WTC11 (cell line): ENCODE measurements at regions of chr10 and their contacts with region 1.

Region 1: DNA sequence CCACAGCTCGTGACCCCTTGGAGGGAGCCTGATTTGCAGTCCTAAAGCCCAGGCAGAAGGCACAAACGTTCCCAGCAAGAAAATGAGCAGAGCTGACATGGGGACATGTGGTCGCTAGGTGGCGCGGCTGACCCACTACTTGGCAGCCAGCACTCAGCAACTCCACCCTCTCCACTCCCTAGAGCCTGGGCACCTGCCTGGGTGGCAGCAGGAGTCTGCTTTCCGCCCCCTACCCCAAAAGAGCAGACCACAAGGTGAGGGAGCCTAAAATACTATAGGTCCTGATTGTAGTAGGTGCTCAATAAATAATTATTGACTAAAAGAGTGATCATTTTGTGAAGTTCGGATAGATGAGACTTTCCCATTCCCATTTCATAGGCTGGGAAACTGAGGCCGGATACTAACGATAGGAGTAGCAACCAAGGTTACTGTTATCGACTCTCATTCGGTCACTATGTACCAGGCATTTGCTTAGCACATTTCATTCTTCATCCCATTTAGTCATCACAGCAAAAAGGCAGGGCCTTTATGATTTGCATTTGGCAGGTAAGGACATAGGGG is 57.4 kb downstream of the NEUROG3 start:
- DNase-seq: peak; percentile 88
- ATAC-seq: peak; percentile 89
- H3K4me3 Mint-ChIP-seq: no peak overlapping the region
- H3K27ac Mint-ChIP-seq: no peak overlapping the region
- H3K4me1 Mint-ChIP-seq: peaks cover 19% of the 10 kb centered on the region
- H3K27me3 Mint-ChIP-seq: no peaks in the 10 kb centered on the region
- CTCF ChIP-seq: peak; percentile 94

Region 2: DNA sequence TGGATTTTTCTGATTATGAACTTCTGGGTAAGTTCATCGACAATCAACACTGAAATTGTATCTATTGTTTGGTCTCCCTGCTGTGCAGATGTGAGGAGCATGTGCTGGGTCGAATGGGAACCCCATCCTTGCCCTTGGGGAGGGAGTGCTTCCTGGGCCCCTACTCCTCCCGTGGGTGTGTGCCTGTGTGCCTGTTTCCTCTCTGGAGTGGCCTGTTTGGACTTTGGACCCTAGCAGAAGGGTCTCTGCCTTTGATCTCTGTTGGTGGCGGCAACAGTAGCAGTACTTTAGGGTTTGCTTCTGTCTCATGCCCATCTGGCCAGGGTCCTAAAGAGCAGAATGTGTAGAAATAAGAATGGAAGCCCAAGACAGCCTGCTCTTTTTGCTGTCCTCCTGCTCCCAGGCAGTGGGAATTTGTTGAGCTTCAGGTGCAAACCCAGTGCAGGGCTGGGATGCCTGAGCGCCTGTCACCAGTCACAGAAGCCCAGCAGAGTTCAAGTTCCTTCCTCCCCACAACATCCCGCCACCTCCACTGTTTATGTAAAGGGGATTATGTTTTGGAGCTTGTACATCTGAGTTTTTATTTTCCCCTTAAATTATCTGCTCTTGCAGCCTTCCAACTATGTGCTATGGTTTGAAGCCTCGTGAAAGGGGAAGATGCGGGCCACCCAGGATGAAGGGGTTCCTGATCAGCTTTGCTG is 97.6 kb before region 1 on chr10:
- CTCF ChIA-PET with region 1: interaction called, 19 read pairs
- POLR2A ChIA-PET with region 1: no interaction called
- DNase-seq: no peak
- ATAC-seq: no peak
- H3K4me3 Mint-ChIP-seq: no peak overlapping the region
- H3K27ac Mint-ChIP-seq: no peak overlapping the region
- H3K4me1 Mint-ChIP-seq: peaks cover under 1% of the 10 kb centered on the region; the same call in 1 of the 2 replicates
- H3K27me3 Mint-ChIP-seq: peaks cover 2% of the 10 kb centered on the region; the same call in 1 of the 2 replicates
- CTCF ChIP-seq: no peak

Region 3: GRCh38 chr10:69537449-69537848 is 21.7 kb after region 1 on chr10:
- CTCF ChIA-PET with region 1: no interaction called
- POLR2A ChIA-PET with region 1: no interaction called
- DNase-seq: no peak
- ATAC-seq: no peak
- H3K4me3 Mint-ChIP-seq: no peak overlapping the region
- H3K27ac Mint-ChIP-seq: no peak overlapping the region
- H3K4me1 Mint-ChIP-seq: no peaks in the 10 kb centered on the region
- H3K27me3 Mint-ChIP-seq: peaks cover 29% of the 10 kb centered on the region
- CTCF ChIP-seq: no peak

Region 4: DNA sequence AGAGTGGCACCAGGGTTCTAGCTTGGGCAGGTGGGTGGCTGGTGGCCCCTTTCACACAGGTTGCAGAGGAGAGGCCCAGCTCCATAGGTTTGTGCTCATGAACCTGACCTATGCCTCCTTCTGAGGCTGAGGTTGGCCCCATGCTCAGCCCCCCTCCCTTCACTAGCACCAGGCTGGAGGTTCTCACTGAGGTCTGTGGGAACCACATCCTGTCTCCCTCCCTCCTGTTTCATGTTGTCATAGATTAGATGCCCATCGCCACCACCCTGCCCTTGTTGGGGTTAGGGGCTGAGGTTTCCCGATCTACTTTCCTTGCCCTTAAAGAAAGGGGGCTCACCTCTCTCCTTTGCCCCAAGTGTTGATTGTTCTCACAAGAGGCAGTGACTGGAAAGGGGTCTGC is 42.8 kb after region 1 on chr10:
- CTCF ChIA-PET with region 1: interaction called, 13 read pairs
- POLR2A ChIA-PET with region 1: no interaction called
- DNase-seq: no peak
- ATAC-seq: no peak
- H3K4me3 Mint-ChIP-seq: no peak overlapping the region
- H3K27ac Mint-ChIP-seq: no peak overlapping the region
- H3K4me1 Mint-ChIP-seq: peaks cover 23% of the 10 kb centered on the region
- H3K27me3 Mint-ChIP-seq: peaks cover 15% of the 10 kb centered on the region
- CTCF ChIP-seq: no peak

Region 5: DNA sequence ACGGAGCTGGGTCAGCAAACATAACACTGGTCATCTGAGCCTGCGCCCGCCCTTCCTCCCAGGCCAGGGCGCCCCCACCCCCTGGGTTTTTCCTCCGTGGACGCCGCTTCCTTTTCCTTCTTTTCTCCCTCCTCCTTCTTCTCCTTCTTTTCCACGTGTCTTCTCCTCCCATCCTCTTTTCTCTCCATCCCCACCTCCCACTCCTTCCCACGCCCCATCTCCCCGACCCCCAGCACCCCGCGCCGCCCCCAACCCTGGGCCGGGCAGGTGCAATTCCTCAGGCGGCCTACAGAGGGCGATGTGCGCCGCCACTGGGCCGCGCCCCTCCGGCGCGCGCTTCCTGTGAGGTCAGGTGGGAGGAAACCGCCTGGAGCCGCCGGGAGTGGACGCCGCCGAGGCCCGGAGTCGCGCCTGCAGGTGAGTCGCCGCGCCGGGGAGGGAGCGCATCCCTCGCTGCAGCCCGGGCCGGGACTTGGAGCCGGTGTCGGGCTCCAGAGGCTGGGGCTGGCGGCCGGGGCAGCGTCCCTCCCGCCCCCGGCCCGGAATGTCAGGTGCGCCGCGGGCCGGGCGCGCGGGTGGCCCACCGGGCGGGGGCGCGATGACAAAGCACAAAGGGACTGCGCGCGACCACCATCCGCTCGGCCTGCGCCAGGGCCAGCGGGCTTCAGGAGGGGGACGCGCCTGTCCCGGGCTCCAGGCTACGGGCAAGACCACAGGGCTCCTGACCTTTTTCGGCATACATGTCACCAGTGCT is 114.3 kb after region 1 on chr10 and contains the start of gene FAM241B:
- CTCF ChIA-PET with region 1: interaction called, 511 read pairs
- POLR2A ChIA-PET with region 1: interaction called, 19 read pairs
- DNase-seq: peak; percentile 88
- ATAC-seq: peak; percentile 83
- H3K4me3 Mint-ChIP-seq: peak within 1 kb of the TSS; percentile 76
- H3K27ac Mint-ChIP-seq: no peak within 1 kb of the TSS
- H3K4me1 Mint-ChIP-seq: peaks cover 8% of the 10 kb centered on the region
- H3K27me3 Mint-ChIP-seq: peaks cover 15% of the 10 kb centered on the region
- CTCF ChIP-seq: peak; percentile 100
- total RNA-seq, gene FAM241B: 24.4 to 28.9 TPM (median 26.9 TPM) in 3 replicates

Region 6: DNA sequence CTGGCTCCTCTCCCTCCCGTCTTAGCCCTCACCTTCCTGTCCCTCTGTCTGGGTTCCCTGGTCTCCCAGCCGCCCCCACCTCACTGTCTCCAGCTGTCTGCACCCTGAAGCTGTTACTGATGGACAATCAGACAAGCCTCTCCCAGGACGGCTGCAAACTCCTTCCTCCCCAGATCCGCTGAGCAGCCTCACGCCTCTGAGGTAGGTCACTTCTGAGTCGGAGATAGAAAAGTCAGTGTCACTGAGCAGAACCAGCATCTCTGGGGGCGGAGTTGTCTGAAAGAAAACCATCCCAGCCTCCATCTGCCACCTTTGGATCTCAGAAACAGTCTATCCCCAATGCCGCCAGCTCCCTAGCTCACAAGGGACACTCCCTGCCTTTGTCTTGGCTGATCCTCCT is 141.7 kb after region 1 on chr10:
- CTCF ChIA-PET with region 1: interaction called, 48 read pairs
- POLR2A ChIA-PET with region 1: no interaction called
- DNase-seq: no peak
- ATAC-seq: no peak
- H3K4me3 Mint-ChIP-seq: no peak overlapping the region
- H3K27ac Mint-ChIP-seq: no peak overlapping the region
- H3K4me1 Mint-ChIP-seq: peaks cover 48% of the 10 kb centered on the region
- H3K27me3 Mint-ChIP-seq: peaks cover 5% of the 10 kb centered on the region
- CTCF ChIP-seq: no peak

Region 7: DNA sequence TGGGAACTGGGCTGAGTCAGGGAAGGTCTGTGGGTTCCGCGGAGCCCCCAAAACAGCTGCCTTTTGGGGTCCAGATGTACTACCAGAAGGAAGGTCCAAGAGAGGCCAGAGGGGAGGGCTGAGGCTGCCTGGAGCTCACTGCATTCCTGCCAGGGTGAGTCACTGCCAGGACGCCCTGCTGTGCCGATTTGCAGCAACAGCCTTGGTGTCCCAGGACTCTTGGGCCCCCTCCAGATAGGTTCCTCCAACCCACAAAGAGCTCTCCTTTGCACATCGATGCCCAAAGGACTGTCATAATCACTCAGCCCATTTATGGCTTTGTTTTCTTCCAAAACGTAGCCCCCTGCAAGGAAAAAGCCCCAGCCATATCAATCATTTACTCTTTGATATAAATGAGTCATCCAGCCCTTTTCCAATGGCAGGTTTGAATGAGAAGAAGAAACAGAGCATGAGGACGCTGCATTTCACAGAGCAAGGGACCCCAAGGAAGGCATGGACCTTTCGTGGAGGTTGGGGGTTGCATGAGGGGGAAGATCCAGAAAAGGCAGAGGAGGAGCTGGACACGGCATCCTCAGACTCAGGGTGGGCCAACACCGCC is 253.7 kb after region 1 on chr10:
- CTCF ChIA-PET with region 1: no interaction called
- POLR2A ChIA-PET with region 1: no interaction called
- DNase-seq: peak; percentile 64
- ATAC-seq: peak; percentile 86
- H3K4me3 Mint-ChIP-seq: no peak overlapping the region
- H3K27ac Mint-ChIP-seq: no peak overlapping the region
- H3K4me1 Mint-ChIP-seq: peaks cover 12% of the 10 kb centered on the region
- H3K27me3 Mint-ChIP-seq: peaks cover 9% of the 10 kb centered on the region
- CTCF ChIP-seq: no peak